ENCODE measurements at regions of chr12 and their contacts with region 1.

Region 1: GRCh38 chr12:133130038-133130807 is at the starts of genes ZNF10 and ZNF891:
- DNase-seq: peak; percentile 94 to 99 (median 97)
- ATAC-seq: peak; percentile 79 to 87
- H3K4me3 Mint-ChIP-seq: peak within 1 kb of the TSS; percentile 90 to 98 (median 96)
- H3K27ac Mint-ChIP-seq: peak within 1 kb of the TSS; percentile 97 to 100 (median 100)
- H3K4me1 Mint-ChIP-seq: peaks cover 11 to 27% (median 26%) of the 10 kb centered on the region in 4 donors
- H3K27me3 Mint-ChIP-seq: no peaks in the 10 kb centered on the region
- polyA plus RNA-seq, gene ZNF10: 12.7 to 15.1 (median 14.1) TPM
- polyA plus RNA-seq, gene ZNF891: 0.35 to 0.82 (median 0.69) TPM

Region 2: DNA sequence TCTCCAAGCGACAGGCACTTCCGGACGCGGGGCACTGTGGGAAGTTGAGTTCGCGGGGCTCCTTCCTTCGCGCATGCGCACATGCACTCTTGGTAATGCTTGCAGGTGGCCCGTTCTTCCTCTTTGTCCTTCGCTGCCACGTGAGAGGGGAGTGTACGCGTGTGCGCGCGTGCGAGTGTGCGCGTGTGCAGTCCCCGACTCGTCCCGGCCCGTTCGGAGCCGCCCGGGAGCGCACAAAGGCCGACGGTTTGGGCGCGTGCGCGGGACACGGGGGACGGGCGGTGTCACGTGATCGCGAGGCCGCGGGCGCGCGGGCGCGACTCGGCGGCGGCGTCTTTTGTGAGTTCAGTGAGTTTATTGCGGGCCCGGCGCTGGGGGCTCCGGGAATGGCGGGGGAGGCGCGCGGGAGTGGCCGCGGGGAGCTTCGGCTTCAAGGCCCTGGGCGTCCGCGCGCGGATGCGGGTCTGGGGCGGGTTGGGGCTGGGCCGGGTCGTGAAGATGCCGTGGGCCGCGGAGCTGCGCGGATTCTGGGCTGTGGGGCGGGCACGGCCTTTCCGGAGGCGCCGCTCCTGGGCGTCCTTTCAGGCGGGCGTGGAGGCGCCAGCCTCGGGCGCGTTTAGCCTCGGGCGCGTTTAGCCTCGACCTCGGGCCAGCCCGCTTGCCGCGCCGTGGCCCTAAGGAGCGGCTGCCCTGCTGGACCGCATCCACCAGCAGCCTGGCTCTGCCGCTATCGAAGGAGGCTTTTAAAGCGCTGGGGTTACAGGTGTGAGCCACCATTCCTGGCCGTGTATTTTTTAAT is 92.8 kb before region 1 on chr12 and contains the start of gene ZNF84:
- POLR2A ChIA-PET with region 1: interaction called, 14 read pairs
- DNase-seq: peak; percentile 93 to 99 (median 97)
- ATAC-seq: peak; percentile 94 to 95
- H3K4me3 Mint-ChIP-seq: peak within 1 kb of the TSS; percentile 86 to 96 (median 94)
- H3K27ac Mint-ChIP-seq: peak within 1 kb of the TSS; percentile 92 to 98 (median 95)
- H3K4me1 Mint-ChIP-seq: peaks cover 0 to 22% (median 8%) of the 10 kb centered on the region in 4 donors
- H3K27me3 Mint-ChIP-seq: peaks cover 0 to 5% (median 2%) of the 10 kb centered on the region in 5 donors
- polyA plus RNA-seq, gene ZNF84: 16.9 to 19.0 (median 18.2) TPM

Region 3: DNA sequence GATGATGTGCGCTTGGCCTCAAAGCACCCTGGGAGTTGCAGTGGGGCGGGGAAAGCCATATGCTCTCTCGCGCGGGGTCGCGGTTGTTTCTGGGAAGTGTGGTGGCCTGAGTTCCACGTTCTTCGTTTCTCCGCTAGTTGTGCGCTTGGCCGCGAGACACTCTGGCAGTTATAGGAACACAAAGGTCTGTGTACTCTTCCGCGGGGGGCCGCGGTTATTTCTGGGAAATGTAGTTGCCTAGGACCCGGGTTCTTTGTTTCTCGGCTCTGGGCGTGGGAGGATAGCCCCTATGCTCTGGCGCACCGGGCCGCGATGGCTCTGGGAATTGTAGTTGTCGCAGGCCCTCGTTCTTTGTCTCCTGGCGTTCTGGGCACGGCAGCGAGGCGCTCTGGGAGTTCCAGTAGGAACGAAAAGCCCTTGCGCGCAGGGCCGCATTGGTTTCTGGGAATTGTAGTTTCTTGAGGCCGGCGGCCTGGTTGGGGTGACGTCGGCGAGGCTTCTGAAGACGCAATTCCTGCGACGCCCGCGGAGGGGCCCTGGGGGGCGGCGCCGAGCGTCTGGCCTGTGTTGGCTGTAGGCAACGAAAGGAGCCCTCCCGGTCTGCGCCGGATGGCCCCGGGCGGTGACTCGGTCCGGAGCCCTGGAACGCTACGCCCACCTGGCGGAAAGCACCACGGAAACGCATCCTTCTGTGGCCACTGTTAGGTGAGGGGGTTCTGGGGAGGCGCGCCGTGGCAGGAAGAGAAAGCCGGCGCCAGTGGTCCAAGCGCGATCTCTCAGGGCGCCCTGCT is 49.7 kb before region 1 on chr12 and contains the start of gene ZNF140:
- POLR2A ChIA-PET with region 1: interaction called, 15 read pairs
- DNase-seq: peak; percentile 92 to 98 (median 97)
- ATAC-seq: peak; percentile 63 to 66
- H3K4me3 Mint-ChIP-seq: peak within 1 kb of the TSS in 2 of 10 donors; percentile 23 to 61
- H3K27ac Mint-ChIP-seq: peak within 1 kb of the TSS in 3 of 10 donors; percentile 31 to 85 (median 84)
- H3K4me1 Mint-ChIP-seq: peaks cover 1 to 18% (median 10%) of the 10 kb centered on the region in 4 donors
- H3K27me3 Mint-ChIP-seq: no peaks in the 10 kb centered on the region
- polyA plus RNA-seq, gene ZNF140: 18.4 to 22.3 (median 22.0) TPM

Region 4: DNA sequence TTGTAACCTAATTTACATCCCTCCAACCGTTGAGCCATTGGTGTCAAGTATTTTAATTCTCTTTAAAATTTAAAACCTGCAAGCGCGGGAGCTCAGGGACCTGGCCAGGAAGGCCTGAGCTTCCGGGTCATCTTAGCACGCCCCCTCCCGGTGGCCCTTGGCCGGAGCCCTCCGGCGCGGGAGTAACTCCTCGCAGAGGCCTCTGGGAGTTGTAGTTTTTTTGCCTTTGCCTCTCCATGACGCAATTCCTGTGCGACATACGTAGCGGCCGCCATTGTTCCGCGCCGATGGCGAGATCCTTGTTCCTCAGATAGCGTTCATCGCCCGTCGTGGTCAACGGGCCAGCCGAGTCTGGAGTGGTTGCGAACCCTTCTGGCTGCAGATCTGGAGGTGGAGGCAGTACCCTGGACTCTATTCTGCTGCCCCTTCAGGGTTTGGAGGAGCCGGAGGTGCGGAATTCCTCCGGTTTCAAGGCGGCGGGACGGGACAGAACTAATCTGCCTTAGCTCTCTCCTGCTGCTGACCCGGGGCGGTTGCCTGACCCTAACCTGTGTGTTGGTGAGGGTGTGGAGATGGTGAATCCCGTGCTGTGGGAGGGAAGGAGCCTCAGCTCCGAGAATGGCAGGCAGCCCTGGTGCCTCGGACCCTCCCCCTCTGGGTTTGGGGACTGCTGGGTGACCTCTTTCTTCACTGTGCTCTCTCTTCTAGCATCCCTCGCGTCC is 51.2 kb after region 1 on chr12 and contains the start of gene ZNF268:
- POLR2A ChIA-PET with region 1: interaction called, 16 read pairs
- DNase-seq: peak; percentile 74 to 95 (median 86)
- ATAC-seq: peak; percentile 87 to 94
- H3K4me3 Mint-ChIP-seq: peak within 1 kb of the TSS; percentile 90 to 97 (median 94)
- H3K27ac Mint-ChIP-seq: peak within 1 kb of the TSS; percentile 89 to 97 (median 94)
- H3K4me1 Mint-ChIP-seq: peaks cover 18 to 30% (median 21%) of the 10 kb centered on the region in 4 donors
- H3K27me3 Mint-ChIP-seq: no peaks in the 10 kb centered on the region
- polyA plus RNA-seq, gene ZNF268: 15.3 to 18.3 (median 16.3) TPM